ENCODE measurements at regions of chr4 and their contacts with region 1.

Region 1: GRCh38 chr4:139229534-139230039 is 50.4 kb downstream of the MGARP start:
- DNase-seq: peak; percentile 75
- H3K4me3 Mint-ChIP-seq: no peak overlapping the region
- H3K27ac Mint-ChIP-seq: no peak overlapping the region
- H3K4me1 Mint-ChIP-seq: no peaks in the 10 kb centered on the region
- H3K27me3 Mint-ChIP-seq: no peaks in the 10 kb centered on the region

Region 2: DNA sequence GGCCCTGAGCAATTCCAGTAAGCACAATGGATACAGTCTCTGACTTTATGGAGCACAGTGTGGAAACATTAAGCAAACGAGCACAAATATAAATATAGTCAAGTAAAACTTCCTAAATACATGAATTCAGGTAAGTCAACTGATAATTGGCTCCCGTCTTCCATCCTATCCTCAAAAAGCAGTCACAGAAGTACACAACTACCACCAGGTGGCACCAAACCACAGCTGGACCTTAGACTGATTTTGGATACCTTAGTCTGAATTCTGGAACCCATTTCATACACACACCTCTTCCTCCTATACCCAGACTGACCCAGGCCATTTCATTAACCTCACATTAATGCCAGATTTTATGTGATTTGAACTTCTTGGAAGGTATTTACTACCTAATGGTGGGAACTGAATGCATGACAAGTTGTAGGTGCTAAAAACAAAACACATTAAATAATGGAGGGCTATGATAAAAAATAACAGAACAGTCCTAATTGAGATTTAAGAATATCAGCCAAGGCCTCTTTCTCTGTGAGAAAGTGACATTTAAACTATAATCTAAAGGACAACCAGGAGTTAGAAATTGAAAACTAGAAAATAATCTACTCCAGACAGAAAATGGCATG is 130.1 kb before region 1 on chr4:
- intact Hi-C with region 1: loop called (anchors 2 kb)
- DNase-seq: peak; percentile 90
- H3K4me3 Mint-ChIP-seq: no peak overlapping the region
- H3K27ac Mint-ChIP-seq: no peak overlapping the region
- H3K4me1 Mint-ChIP-seq: peaks cover 4% of the 10 kb centered on the region
- H3K27me3 Mint-ChIP-seq: no peaks in the 10 kb centered on the region

Measured in activated CD4-positive, alpha-beta T cell treated with anti-CD3 and anti-CD28 coated beads, Interleukin-2, amount 10 ng/mL, durations not matched to agents 24 days and 14 days (primary cell).